ENCODE measurements at regions of chr15 and their contacts with region 1.

Region 1: GRCh38 chr15:33132722-33133345 is 61.7 kb downstream of the FMN1 start:
- DNase-seq: peak; percentile 92
- H3K4me3 ChIP-seq: no peak overlapping the region
- H3K27ac ChIP-seq: peak overlapping the region; percentile 7
- H3K4me1 ChIP-seq: peaks cover 23% of the 10 kb centered on the region
- H3K27me3 ChIP-seq: no peaks in the 10 kb centered on the region
- CTCF ChIP-seq: peak; percentile 81 to 82

Region 2: GRCh38 chr15:32651229-32651837 is 481.5 kb before region 1 on chr15:
- CTCF ChIA-PET with region 1: no interaction called
- dilution Hi-C with region 1: no loop called
- in situ Hi-C with region 1: loop called (anchors 10 to 25 kb)
- intact Hi-C with region 1: no loop called
- DNase-seq: peak; percentile 47
- H3K4me3 ChIP-seq: no peak overlapping the region
- H3K27ac ChIP-seq: no peak overlapping the region
- H3K4me1 ChIP-seq: peaks cover 22% of the 10 kb centered on the region
- H3K27me3 ChIP-seq: no peaks in the 10 kb centered on the region
- CTCF ChIP-seq: peak; percentile 98 to 99

Region 3: GRCh38 chr15:32683906-32684584 is 448.8 kb before region 1 on chr15:
- CTCF ChIA-PET with region 1: no interaction called
- dilution Hi-C with region 1: no loop called
- in situ Hi-C with region 1: loop called in 1 of 2 experiments (anchors 10 kb)
- intact Hi-C with region 1: no loop called
- DNase-seq: peak; percentile 89
- H3K4me3 ChIP-seq: no peak overlapping the region
- H3K27ac ChIP-seq: peak overlapping the region; percentile 28
- H3K4me1 ChIP-seq: peaks cover 64% of the 10 kb centered on the region
- H3K27me3 ChIP-seq: no peaks in the 10 kb centered on the region
- CTCF ChIP-seq: no peak

Region 4: GRCh38 chr15:32956006-32956405 is 176.8 kb before region 1 on chr15:
- CTCF ChIA-PET with region 1: no interaction called
- dilution Hi-C with region 1: no loop called
- in situ Hi-C with region 1: no loop called
- intact Hi-C with region 1: loop called (anchors 10 kb)
- DNase-seq: peak; percentile 25
- H3K4me3 ChIP-seq: no peak overlapping the region
- H3K27ac ChIP-seq: no peak overlapping the region
- H3K4me1 ChIP-seq: no peaks in the 10 kb centered on the region
- H3K27me3 ChIP-seq: no peaks in the 10 kb centered on the region
- CTCF ChIP-seq: peak; percentile 54 to 75

Region 5: GRCh38 chr15:33029109-33029652 is 103.7 kb before region 1 on chr15:
- CTCF ChIA-PET with region 1: no interaction called
- dilution Hi-C with region 1: no loop called
- in situ Hi-C with region 1: loop called (anchors 5 to 10 kb)
- intact Hi-C with region 1: no loop called
- DNase-seq: no peak
- H3K4me3 ChIP-seq: no peak overlapping the region
- H3K27ac ChIP-seq: no peak overlapping the region
- H3K4me1 ChIP-seq: peaks cover 8% of the 10 kb centered on the region
- H3K27me3 ChIP-seq: no peaks in the 10 kb centered on the region
- CTCF ChIP-seq: no peak

Region 6: GRCh38 chr15:33098094-33099040 is 34.5 kb before region 1 on chr15:
- CTCF ChIA-PET with region 1: interaction called, 10 read pairs
- dilution Hi-C with region 1: no loop called
- in situ Hi-C with region 1: loop called in 1 of 2 experiments (anchors 5 kb)
- intact Hi-C with region 1: no loop called
- DNase-seq: peak; percentile 74
- H3K4me3 ChIP-seq: no peak overlapping the region
- H3K27ac ChIP-seq: peak overlapping the region; percentile 64
- H3K4me1 ChIP-seq: peaks cover 17% of the 10 kb centered on the region
- H3K27me3 ChIP-seq: no peaks in the 10 kb centered on the region
- CTCF ChIP-seq: no peak

Measured in mammary epithelial cell (primary cell).